Naive thymus-derived CD4-positive, alpha-beta T cell (primary cell): ENCODE measurements at regions of chr1 and their contacts with region 1.

Region 1: DNA sequence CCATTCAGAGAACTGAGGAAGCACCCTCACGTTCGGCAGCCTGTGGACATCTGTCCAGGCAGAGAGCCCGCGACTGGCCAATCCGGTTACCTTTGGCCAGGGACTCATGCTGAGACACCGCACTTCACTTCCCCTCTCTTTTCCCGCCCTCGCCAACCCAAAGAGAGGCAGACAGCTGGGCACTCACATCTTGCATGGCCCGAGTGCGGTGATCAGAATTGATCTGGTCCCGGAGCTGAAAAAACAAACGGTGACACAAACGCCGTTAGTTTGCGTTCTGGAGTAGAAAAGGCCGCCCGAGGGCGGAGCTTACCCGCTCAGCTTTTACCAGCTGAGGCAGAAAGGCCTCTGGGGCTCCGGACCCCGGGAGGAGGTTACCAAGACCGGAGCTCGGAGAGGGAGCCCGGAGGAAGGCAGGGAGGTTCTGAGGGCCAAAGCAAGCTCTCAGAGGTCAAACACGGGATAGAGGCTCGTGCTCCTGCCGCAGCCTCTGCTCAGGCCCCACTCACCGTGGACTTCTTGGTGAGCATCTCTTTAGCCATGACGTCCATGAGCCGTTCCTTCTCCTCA is 376 bp downstream of the SF3A3 start:
- DNase-seq: peak in 2 of 9 donors; percentile 46 to 47
- ATAC-seq: peak; percentile 33
- H3K4me3 ChIP-seq: peak overlapping the region; percentile 97
- H3K4me3 Mint-ChIP-seq: peak overlapping the region; percentile 89 to 100 (median 99)
- H3K27ac ChIP-seq: peak overlapping the region; percentile 79
- H3K27ac Mint-ChIP-seq: peak overlapping the region; percentile 87 to 99 (median 91)
- H3K4me1 ChIP-seq: peaks cover 13 to 17% of the 10 kb centered on the region in 2 donors
- H3K4me1 Mint-ChIP-seq: peaks cover 16 to 30% (median 24%) of the 10 kb centered on the region in 7 donors
- H3K27me3 ChIP-seq: no peaks in the 10 kb centered on the region
- H3K27me3 Mint-ChIP-seq: no peaks in the 10 kb centered on the region

Region 2: GRCh38 chr1:37807555-37808368 is 181.7 kb before region 1 on chr1 and contains the starts of genes C1orf122 and YRDC:
- CTCF ChIA-PET with region 1: no interaction called
- POLR2A ChIA-PET with region 1: interaction called, 3 read pairs
- intact Hi-C with region 1: loop called (anchors 1 kb)
- DNase-seq: peak; percentile 82 to 94 (median 88)
- ATAC-seq: peak; percentile 94
- H3K4me3 ChIP-seq: peak within 1 kb of the TSS; percentile 89
- H3K4me3 Mint-ChIP-seq: peak within 1 kb of the TSS; percentile 85 to 99 (median 96)
- H3K27ac ChIP-seq: peak within 1 kb of the TSS; percentile 96
- H3K27ac Mint-ChIP-seq: peak within 1 kb of the TSS; percentile 89 to 98 (median 96)
- H3K4me1 ChIP-seq: peaks cover 15 to 20% of the 10 kb centered on the region in 2 donors
- H3K4me1 Mint-ChIP-seq: peaks cover 27 to 55% (median 34%) of the 10 kb centered on the region in 7 donors
- H3K27me3 ChIP-seq: no peaks in the 10 kb centered on the region
- H3K27me3 Mint-ChIP-seq: no peaks in the 10 kb centered on the region
- total RNA-seq, gene C1orf122: 11.4 to 20.6 (median 11.7) TPM
- total RNA-seq, gene YRDC: 13.1 to 30.6 (median 22.3) TPM

Region 3: GRCh38 chr1:37890378-37891014 is 99.0 kb before region 1 on chr1:
- CTCF ChIA-PET with region 1: no interaction called
- POLR2A ChIA-PET with region 1: no interaction called
- intact Hi-C with region 1: loop called in 1 of 2 experiments (anchors 1 kb)
- DNase-seq: peak in 6 of 9 donors; percentile 22 to 49 (median 38)
- ATAC-seq: peak; percentile 64
- H3K4me3 ChIP-seq: no peak overlapping the region
- H3K4me3 Mint-ChIP-seq: no peak overlapping the region
- H3K27ac ChIP-seq: no peak overlapping the region
- H3K27ac Mint-ChIP-seq: peak overlapping the region in 4 of 9 donors; percentile 43 to 65 (median 50)
- H3K4me1 ChIP-seq: no peaks in the 10 kb centered on the region
- H3K4me1 Mint-ChIP-seq: peaks cover 0 to 10% (median 4%) of the 10 kb centered on the region in 7 donors
- H3K27me3 ChIP-seq: no peaks in the 10 kb centered on the region
- H3K27me3 Mint-ChIP-seq: no peaks in the 10 kb centered on the region

Region 4: DNA sequence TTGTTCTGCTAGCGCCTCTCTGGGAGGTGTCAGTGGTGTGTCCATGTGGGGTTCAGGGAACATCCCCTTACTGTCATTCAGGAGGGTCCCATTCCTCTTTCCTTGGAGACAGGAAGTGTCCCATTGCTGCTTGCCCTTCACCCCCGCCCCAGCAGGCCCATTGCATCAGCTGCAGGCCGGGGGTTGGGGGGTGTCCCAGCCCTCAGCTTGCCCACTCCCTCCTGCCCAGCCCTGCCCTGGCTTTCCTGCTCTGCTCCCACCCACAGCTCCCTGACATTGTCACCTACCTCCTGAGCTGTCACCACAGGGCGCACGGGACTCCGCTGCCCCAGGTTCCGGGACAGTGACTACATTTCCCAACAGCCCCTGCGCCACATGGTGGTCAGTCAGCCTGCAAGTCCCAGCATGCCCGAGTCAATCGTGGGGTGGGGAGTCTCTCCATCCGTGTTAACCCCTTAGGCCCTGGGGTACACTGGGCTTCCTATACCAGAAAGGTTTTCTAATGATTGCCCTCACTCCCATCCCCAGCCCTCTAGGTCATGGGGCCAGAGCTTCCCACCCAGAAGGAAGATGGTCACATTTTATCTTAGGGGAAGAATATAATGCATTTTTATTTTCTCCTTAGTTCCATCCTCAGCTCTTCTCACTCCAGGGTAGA is 42.6 kb before region 1 on chr1 and contains the start of gene INPP5B:
- CTCF ChIA-PET with region 1: interaction called, 3 read pairs
- POLR2A ChIA-PET with region 1: interaction called, 3 read pairs
- intact Hi-C with region 1: loop called (anchors 1 kb)
- DNase-seq: peak; percentile 25 to 79 (median 53)
- ATAC-seq: peak; percentile 91
- H3K4me3 ChIP-seq: peak within 1 kb of the TSS; percentile 61
- H3K4me3 Mint-ChIP-seq: peak within 1 kb of the TSS; percentile 81 to 98 (median 92)
- H3K27ac ChIP-seq: peak within 1 kb of the TSS; percentile 62
- H3K27ac Mint-ChIP-seq: peak within 1 kb of the TSS; percentile 66 to 97 (median 89)
- H3K4me1 ChIP-seq: peaks cover 0 to 7% of the 10 kb centered on the region in 2 donors
- H3K4me1 Mint-ChIP-seq: peaks cover 13 to 26% (median 15%) of the 10 kb centered on the region in 7 donors
- H3K27me3 ChIP-seq: no peaks in the 10 kb centered on the region
- H3K27me3 Mint-ChIP-seq: no peaks in the 10 kb centered on the region
- total RNA-seq, gene INPP5B: 23.3 to 35.7 (median 30.6) TPM

Region 5: DNA sequence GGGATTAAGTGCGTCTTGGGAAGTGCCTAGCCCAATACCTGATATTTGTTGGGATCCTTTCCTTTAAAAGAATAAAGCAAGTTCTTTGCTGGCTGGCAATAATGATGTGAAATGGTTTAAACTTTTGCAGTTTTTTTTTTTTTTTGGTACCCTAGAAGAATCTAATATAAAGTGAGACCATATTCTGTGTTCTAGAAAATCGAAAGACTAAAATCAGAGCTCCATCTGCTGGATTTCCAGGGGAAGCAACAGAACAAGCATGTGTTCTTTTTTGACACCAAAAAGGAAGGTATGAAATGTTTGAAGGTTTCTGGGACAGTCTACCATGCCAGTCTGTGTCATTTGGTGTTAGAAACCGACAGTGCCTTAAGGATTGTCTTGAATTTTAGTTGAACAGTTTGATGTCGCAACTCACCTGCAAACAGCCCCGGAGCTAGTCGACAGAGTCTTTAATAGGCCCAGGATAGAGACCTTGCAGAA is 29.5 kb after region 1 on chr1:
- CTCF ChIA-PET with region 1: interaction called, 14 read pairs
- POLR2A ChIA-PET with region 1: interaction called, 4 read pairs
- intact Hi-C with region 1: loop called (anchors 1 kb)
- DNase-seq: peak in 5 of 9 donors; percentile 17 to 49 (median 39)
- ATAC-seq: peak; percentile 68
- H3K4me3 ChIP-seq: no peak overlapping the region
- H3K4me3 Mint-ChIP-seq: no peak overlapping the region
- H3K27ac ChIP-seq: no peak overlapping the region
- H3K27ac Mint-ChIP-seq: peak overlapping the region in 2 of 9 donors; percentile 18 to 48
- H3K4me1 ChIP-seq: peaks cover 0 to 4% of the 10 kb centered on the region in 2 donors
- H3K4me1 Mint-ChIP-seq: peaks cover 5 to 28% (median 16%) of the 10 kb centered on the region in 7 donors
- H3K27me3 ChIP-seq: no peaks in the 10 kb centered on the region
- H3K27me3 Mint-ChIP-seq: no peaks in the 10 kb centered on the region